Calu3 (cell line): ENCODE measurements at regions of chr1 and their contacts with region 1.

Region 1: GRCh38 chr1:86515597-86515996 is 31.3 kb upstream of the CLCA4 start:
- DNase-seq: peak; percentile 70
- H3K4me3 Mint-ChIP-seq: no peak overlapping the region
- H3K27ac Mint-ChIP-seq: peak overlapping the region; percentile 81
- H3K4me1 Mint-ChIP-seq: peaks cover 28% of the 10 kb centered on the region
- H3K27me3 Mint-ChIP-seq: no peaks in the 10 kb centered on the region
- CTCF ChIP-seq: peak; percentile 68

Region 2: GRCh38 chr1:86596741-86597290 is 81.2 kb after region 1 on chr1:
- CTCF ChIA-PET with region 1: no interaction called
- intact Hi-C with region 1: loop called (anchors 10 kb)
- DNase-seq: no peak
- H3K4me3 Mint-ChIP-seq: no peak overlapping the region
- H3K27ac Mint-ChIP-seq: no peak overlapping the region
- H3K4me1 Mint-ChIP-seq: peaks cover 7% of the 10 kb centered on the region
- H3K27me3 Mint-ChIP-seq: no peaks in the 10 kb centered on the region
- CTCF ChIP-seq: no peak

Region 3: GRCh38 chr1:86650065-86650464 is 134.5 kb after region 1 on chr1:
- CTCF ChIA-PET with region 1: interaction called, 11 read pairs
- intact Hi-C with region 1: loop called (anchors 1 kb)
- DNase-seq: no peak
- H3K4me3 Mint-ChIP-seq: no peak overlapping the region
- H3K27ac Mint-ChIP-seq: no peak overlapping the region
- H3K4me1 Mint-ChIP-seq: no peaks in the 10 kb centered on the region
- H3K27me3 Mint-ChIP-seq: no peaks in the 10 kb centered on the region
- CTCF ChIP-seq: no peak

Region 4: GRCh38 chr1:86666368-86666767 is 150.8 kb after region 1 on chr1:
- CTCF ChIA-PET with region 1: no interaction called
- intact Hi-C with region 1: no loop called
- DNase-seq: no peak
- H3K4me3 Mint-ChIP-seq: no peak overlapping the region
- H3K27ac Mint-ChIP-seq: no peak overlapping the region
- H3K4me1 Mint-ChIP-seq: no peaks in the 10 kb centered on the region
- H3K27me3 Mint-ChIP-seq: no peaks in the 10 kb centered on the region
- CTCF ChIP-seq: no peak

Region 5: GRCh38 chr1:86687595-86687994 is 172.0 kb after region 1 on chr1:
- CTCF ChIA-PET with region 1: no interaction called
- intact Hi-C with region 1: loop called (anchors 10 kb)
- DNase-seq: no peak
- H3K4me3 Mint-ChIP-seq: no peak overlapping the region
- H3K27ac Mint-ChIP-seq: no peak overlapping the region
- H3K4me1 Mint-ChIP-seq: no peaks in the 10 kb centered on the region
- H3K27me3 Mint-ChIP-seq: no peaks in the 10 kb centered on the region
- CTCF ChIP-seq: no peak

Region 6: GRCh38 chr1:86741947-86742572 is 226.5 kb after region 1 on chr1:
- CTCF ChIA-PET with region 1: interaction called, 4 read pairs
- intact Hi-C with region 1: loop called (anchors 1 kb)
- DNase-seq: peak; percentile 42
- H3K4me3 Mint-ChIP-seq: no peak overlapping the region
- H3K27ac Mint-ChIP-seq: no peak overlapping the region
- H3K4me1 Mint-ChIP-seq: no peaks in the 10 kb centered on the region
- H3K27me3 Mint-ChIP-seq: no peaks in the 10 kb centered on the region
- CTCF ChIP-seq: peak; percentile 55